Activated CD4-positive, alpha-beta T cell treated with anti-CD3 and anti-CD28 coated beads for 36 hours (primary cell): ENCODE measurements at regions of chr14 and their contacts with region 1.

Region 1: DNA sequence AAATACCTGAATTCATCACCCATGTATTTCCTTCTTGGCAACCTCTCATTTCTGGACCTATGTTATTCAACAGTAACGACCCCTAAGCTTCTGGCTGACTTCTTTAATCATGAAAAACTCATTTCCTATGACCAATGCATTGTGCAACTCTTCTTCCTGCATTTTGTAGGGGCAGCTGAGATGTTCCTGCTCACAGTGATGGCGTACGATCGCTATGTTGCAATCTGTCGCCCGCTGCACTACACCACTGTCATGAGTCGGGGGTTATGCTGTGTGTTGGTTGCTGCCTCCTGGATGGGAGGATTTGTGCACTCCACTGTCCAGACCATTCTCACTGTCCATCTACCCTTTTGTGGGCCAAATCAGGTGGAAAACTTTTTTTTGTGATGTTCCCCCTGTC is 356 bp downstream of the OR4Q2 start:
- DNase-seq: no peak
- ATAC-seq: no peak
- H3K4me3 Mint-ChIP-seq: no peak overlapping the region
- H3K27ac Mint-ChIP-seq: no peak overlapping the region
- H3K4me1 Mint-ChIP-seq: no peaks in the 10 kb centered on the region
- H3K27me3 Mint-ChIP-seq: peaks cover 2% of the 10 kb centered on the region

Region 2: GRCh38 chr14:20059745-20060144 is 57.4 kb after region 1 on chr14 and contains the start of gene OR4L1:
- CTCF ChIA-PET with region 1: no interaction called
- POLR2A ChIA-PET with region 1: no interaction called
- intact Hi-C with region 1: loop called in 1 of 2 experiments (anchors 10 kb)
- DNase-seq: no peak
- ATAC-seq: no peak
- H3K4me3 Mint-ChIP-seq: no peak within 1 kb of the TSS
- H3K27ac Mint-ChIP-seq: no peak within 1 kb of the TSS
- H3K4me1 Mint-ChIP-seq: no peaks in the 10 kb centered on the region
- H3K27me3 Mint-ChIP-seq: no peaks in the 10 kb centered on the region
- total RNA-seq, gene OR4L1: not detected